HCT116 (cell line): ENCODE measurements at regions of chr14 and their contacts with region 1.

Region 1: DNA sequence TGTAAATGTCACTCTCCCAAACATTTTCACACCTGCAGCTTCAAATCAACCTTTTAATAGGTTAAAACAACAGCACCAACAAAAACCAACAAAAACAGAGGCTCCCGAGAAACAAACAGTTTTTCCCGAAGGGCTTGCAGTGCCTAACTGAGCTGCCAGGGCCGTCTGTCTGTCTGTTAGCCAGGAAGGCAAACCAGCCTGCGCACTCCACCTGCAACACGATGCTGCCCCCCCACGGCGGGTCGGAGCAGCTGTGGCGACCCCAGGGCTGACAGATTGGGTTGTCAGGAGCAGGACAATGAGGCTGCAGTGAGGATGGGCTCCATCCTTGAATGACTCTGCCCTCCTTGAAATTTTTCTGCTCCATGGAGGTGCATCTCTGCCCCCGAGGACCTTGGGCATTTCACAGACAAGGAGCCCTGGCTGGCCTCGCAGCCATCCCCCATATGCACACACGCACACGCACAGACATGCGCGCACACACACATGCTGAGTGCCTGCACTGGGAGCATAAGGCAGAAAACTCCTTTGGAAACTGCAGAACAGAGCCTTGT is 2.6 kb downstream of the RTL1 start:
- DNase-seq: peak; percentile 41
- ATAC-seq: peak; percentile 88
- H3K4me3 ChIP-seq: no peak overlapping the region
- H3K27ac ChIP-seq: no peak overlapping the region
- H3K4me1 ChIP-seq: peaks cover 0 to 7% of the 10 kb centered on the region in 2 experiments; a peak in 1 of 4 replicates
- H3K27me3 ChIP-seq: 0 out of 2 replicates have a peak, but pooled peaks cover 3% of the 10 kb centered on the region
- CTCF ChIP-seq: peak; percentile 65 to 92 (median 78)
- POLR2A ChIP-seq: no peak
- RAD21 ChIP-seq: peak; percentile 97

Region 2: DNA sequence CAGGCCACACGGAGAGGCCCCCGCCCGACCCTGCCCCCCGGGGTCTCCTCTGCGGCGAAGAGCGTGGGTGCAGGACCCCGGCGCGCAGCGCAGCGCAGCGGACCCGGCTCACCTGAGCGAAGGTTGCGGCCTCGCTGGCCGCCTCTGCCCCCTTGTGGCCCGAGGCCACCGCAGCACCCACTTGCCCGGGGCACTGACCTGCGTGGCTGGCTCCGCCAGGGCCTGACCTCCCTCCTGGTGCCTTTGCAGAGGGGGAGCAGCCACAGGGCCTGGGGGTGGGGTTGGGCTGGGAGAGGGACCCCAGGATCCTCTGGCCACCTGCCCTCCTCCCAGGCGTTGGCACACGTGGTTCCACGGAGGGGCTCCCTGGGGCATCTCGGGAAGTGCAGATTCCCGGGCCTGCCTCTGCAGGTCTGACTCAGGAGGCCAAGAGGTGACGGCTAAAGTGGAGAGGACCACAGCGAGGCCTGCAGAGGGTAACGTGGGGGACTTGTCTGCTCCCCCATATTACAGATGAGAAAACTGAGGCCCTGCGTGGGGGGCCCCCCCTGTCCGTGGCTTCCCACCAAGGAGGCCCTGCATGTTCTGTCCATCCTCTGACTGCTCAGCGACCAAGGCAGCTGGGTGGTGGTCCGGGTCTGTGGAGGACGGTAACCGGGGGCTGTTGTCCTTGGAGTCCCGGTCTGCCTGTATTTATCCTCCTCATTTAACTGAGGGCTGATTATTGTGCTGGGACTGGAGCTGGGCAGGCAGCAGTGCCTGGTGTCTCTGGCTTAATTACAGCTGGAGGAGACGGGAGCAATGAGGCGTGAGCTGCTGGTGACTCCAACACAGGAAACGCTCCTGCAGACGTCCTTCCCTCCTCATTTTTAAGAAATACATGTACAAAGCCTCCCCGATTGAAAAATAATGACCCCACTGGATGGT is 245.8 kb before region 1 on chr14:
- CTCF ChIA-PET with region 1: no interaction called
- POLR2A ChIA-PET with region 1: no interaction called
- RAD21 ChIA-PET with region 1: no interaction called
- intact Hi-C with region 1: loop called (anchors 2 kb)
- DNase-seq: no peak
- ATAC-seq: peak; percentile 89
- H3K4me3 ChIP-seq: peak overlapping the region; percentile 28 to 44; a peak in 2 of 4 replicates
- H3K27ac ChIP-seq: no peak overlapping the region
- H3K4me1 ChIP-seq: peaks cover 4 to 39% of the 10 kb centered on the region in 2 experiments; a peak in 3 of 4 replicates
- H3K27me3 ChIP-seq: no peaks in the 10 kb centered on the region
- CTCF ChIP-seq: peak in 2 of 3 experiments; percentile 69 to 93; a peak in 4 of 6 replicates
- POLR2A ChIP-seq: no peak
- RAD21 ChIP-seq: no peak

Region 3: DNA sequence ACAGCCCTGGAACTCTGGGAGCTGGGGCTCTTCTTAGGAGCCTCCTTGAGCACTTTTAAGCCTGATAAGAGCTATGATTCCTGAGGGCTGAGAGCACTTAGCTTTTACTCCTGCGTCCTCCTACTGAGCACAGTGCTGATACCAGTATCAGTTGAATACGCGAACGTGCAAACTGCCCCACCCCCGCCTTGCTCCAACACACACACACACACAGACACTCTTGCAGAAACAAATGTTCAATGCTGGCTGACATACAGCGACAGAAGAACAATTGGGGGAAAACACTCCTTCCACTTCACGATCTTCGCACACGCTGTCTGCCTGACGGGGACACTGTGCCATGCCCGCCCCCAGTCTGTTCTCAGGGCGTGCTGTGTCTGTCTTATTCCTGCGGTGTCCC is 231.4 kb before region 1 on chr14:
- CTCF ChIA-PET with region 1: no interaction called
- POLR2A ChIA-PET with region 1: no interaction called
- RAD21 ChIA-PET with region 1: no interaction called
- intact Hi-C with region 1: no loop called
- DNase-seq: no peak
- ATAC-seq: no peak
- H3K4me3 ChIP-seq: no peak overlapping the region
- H3K27ac ChIP-seq: no peak overlapping the region
- H3K4me1 ChIP-seq: peaks cover 0 to 13% of the 10 kb centered on the region in 2 experiments; a peak in 2 of 4 replicates
- H3K27me3 ChIP-seq: no peaks in the 10 kb centered on the region
- CTCF ChIP-seq: no peak
- POLR2A ChIP-seq: no peak
- RAD21 ChIP-seq: no peak

Region 4: DNA sequence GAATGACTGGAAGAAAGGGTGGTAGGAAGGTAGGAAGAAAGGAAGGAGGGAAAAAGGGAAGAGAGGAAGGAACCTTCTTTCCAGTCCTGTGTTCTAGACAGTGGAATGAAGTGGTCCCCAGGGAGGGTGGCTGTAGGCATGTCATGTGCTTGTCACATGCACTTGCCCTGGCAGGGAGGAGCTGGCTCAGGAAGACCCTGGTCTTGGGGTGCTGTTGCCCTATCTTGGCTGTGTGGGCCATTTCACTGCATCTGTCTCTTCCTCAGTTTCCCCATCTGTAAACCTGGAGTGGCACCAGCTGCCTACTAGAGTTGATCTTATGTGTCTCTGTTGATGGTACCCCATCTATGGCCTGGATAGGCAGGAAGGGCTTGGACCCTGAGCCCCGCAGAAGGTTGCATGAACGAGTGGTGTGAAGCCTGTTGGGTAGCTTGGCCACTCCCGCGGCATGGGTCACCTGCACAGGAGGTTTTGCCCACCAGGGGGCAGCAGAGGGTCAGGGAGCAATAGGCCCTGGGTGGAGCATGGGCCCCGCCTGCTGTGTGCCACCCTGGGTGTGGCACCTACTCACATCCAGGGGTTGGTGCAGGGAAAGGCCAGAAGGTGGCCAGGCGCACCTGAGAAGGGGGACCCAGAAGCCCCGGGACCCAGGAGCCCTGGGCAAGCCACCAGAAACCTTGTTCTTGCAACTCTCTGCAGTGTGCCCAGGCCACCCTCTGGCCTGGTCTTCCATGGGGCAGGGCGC is 49.9 kb before region 1 on chr14:
- CTCF ChIA-PET with region 1: interaction called, 5 read pairs
- POLR2A ChIA-PET with region 1: no interaction called
- RAD21 ChIA-PET with region 1: interaction called in 1 of 2 experiments, 5 read pairs
- intact Hi-C with region 1: loop called (anchors 1 kb)
- DNase-seq: peak; percentile 74
- ATAC-seq: peak; percentile 100
- H3K4me3 ChIP-seq: no peak overlapping the region
- H3K27ac ChIP-seq: no peak overlapping the region
- H3K4me1 ChIP-seq: peaks cover 0 to 17% of the 10 kb centered on the region in 2 experiments; a peak in 3 of 4 replicates
- H3K27me3 ChIP-seq: no peaks in the 10 kb centered on the region
- CTCF ChIP-seq: peak; percentile 94 to 97 (median 97)
- POLR2A ChIP-seq: no peak
- RAD21 ChIP-seq: peak; percentile 97

Region 5: DNA sequence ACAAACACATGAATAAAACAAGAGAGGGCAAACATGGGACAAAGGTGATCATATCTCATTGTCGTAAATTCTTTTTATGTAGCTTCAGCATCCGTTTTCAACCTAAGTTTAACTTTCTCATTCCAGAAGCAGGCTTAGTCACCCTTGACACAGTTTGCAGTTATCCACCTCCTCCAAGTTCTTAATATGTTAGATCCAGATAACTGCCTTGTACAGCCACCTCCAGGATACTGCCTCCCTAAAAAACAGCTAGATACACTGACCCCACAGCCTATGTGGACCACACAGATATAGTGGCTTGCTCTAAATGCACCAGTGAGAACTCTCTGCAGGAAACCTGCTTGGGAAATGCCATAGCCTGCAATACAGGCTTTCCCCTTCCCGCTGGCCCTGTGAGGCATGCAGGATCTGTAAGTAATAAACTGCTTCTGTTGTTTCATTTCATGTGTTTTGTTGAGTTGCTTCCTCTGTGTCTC is 13.7 kb after region 1 on chr14:
- CTCF ChIA-PET with region 1: no interaction called
- POLR2A ChIA-PET with region 1: no interaction called
- RAD21 ChIA-PET with region 1: no interaction called
- intact Hi-C with region 1: no loop called
- DNase-seq: no peak
- ATAC-seq: no peak
- H3K4me3 ChIP-seq: no peak overlapping the region
- H3K27ac ChIP-seq: no peak overlapping the region
- H3K4me1 ChIP-seq: no peaks in the 10 kb centered on the region
- H3K27me3 ChIP-seq: no peaks in the 10 kb centered on the region
- CTCF ChIP-seq: no peak
- POLR2A ChIP-seq: no peak
- RAD21 ChIP-seq: no peak

Region 6: DNA sequence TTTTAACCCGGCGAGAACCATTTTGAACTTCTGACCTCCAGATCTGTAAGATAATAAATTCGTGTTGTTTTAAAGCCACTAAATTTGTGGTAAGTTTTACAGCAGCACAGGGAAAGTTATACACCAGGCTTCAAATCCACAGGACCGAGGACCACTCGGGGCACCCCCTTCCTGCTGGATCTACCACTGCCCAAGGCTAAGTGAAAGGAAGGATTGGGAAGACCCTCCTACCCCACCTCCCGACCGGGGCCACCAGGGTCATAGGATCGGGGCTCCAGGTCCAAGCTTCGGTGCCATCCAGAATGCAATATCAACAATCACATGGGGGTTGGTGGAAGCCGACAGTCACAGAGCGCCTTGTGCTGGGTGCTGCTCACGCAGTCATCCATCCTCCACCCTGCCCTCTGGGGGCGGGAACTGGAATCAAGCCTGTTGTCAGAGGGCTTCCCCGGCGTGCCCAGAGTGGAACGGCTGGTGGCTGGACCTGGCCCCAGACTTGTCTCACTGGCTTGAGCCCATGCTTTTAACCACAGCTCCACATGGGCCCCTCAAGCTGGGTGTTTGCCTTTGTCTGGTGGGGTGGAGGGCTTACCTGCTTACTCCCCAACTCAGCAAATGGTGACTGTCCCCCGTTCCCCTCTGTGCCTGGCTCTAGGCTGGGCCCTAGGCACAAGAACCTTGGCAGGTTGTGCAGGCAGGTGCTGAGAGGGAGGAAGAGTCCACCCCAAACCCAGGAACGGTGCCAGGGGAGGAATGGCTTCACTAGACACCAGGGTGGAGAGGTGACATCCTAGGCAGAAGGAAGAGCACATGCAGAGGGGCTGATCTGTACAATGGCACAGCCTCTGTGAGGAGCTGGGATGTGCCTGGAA is 182.9 kb after region 1 on chr14:
- CTCF ChIA-PET with region 1: no interaction called
- POLR2A ChIA-PET with region 1: no interaction called
- RAD21 ChIA-PET with region 1: no interaction called
- intact Hi-C with region 1: loop called (anchors 2 kb)
- DNase-seq: peak; percentile 46
- ATAC-seq: peak; percentile 100
- H3K4me3 ChIP-seq: no peak overlapping the region
- H3K27ac ChIP-seq: no peak overlapping the region; the same call in 1 of the 2 replicates
- H3K4me1 ChIP-seq: peaks cover 0 to 11% of the 10 kb centered on the region in 2 experiments; a peak in 3 of 4 replicates
- H3K27me3 ChIP-seq: no peaks in the 10 kb centered on the region
- CTCF ChIP-seq: peak; percentile 38 to 80 (median 58); a peak in 5 of 6 replicates
- POLR2A ChIP-seq: no peak
- RAD21 ChIP-seq: peak; percentile 70

Region 7: DNA sequence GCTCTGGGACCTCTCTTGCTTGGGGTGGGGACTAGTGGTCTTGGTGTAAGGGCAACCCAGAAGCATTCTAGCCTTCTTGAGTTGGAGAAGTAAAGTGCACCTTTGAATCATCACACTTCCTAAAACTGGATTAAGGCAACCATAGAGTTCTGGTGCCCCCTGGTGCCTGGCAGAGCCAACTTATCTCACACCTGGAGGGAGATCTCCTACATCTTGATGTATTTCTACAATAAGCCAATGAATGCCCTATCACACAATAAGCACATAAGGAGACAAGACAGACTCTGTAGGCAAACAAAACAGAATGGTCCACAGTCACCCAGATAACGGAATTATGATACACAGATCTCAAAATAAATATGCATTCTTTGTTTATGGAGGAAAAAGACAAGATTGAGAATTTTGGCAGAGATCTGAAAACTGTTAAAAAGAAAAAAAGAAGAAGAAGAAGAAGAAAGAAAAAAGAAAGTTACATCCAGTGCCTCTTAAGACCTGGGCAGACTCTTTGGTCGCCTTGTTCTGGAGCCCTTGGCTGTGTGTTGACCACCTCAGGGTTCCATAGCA is 764.7 kb after region 1 on chr14:
- CTCF ChIA-PET with region 1: no interaction called
- POLR2A ChIA-PET with region 1: no interaction called
- RAD21 ChIA-PET with region 1: interaction called in 1 of 2 experiments, 3 read pairs
- intact Hi-C with region 1: loop called (anchors 1 kb)
- DNase-seq: peak; percentile 57
- ATAC-seq: peak; percentile 98
- H3K4me3 ChIP-seq: no peak overlapping the region
- H3K27ac ChIP-seq: no peak overlapping the region
- H3K4me1 ChIP-seq: no peaks in the 10 kb centered on the region
- H3K27me3 ChIP-seq: no peaks in the 10 kb centered on the region
- CTCF ChIP-seq: peak; percentile 67 to 76 (median 69); a peak in 5 of 6 replicates
- POLR2A ChIP-seq: no peak
- RAD21 ChIP-seq: peak; percentile 90